Gastrocnemius medialis (tissue), 4 donors: ENCODE measurements at regions of chr9 and their contacts with region 1.

Region 1: DNA sequence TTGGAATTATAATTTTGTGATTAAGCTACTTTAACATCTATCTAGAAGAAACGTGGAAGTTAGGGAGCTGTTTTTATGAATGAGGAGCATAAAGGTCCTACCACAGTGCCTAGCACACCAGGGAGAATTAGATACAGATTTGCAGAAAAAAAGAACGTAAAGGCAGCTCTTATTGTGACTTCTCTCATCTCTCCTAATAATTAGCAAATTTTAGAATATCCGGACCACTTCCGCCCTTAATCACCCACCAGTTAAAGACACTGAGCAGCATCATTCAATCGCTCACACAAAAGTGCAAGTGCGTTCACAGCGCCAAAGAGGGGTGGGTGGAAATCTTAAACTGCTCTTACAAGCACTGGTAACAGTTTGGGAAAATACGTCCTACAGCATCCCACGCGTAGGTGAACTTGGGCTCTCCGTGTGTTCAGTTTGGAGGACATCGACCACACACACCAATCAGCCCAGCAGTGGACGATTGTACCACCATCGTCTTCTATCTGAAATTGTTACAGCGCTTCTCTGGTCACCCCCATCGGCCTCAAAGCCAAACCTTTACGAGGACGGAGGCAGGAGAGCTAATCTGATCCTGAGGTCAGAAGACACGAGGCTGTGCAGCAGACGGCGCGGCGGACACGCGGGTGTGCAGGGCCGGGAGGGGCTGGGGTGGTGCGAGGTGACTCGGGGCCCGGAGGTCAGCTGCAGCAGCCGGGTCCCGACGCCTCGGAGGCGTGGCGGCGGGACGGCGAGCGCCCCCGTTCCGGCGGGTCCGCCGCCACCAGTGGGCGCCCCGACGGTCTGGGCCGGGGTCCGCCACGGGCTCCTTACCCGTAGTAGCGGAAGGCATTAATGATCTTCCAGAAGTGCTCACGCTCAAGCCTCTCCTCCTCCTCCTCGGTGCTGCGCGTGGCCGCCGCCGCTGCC is 646 bp downstream of the CARNMT1 start:
- DNase-seq: peak; percentile 49 to 70
- ATAC-seq: peak; percentile 71 to 74
- H3K4me3 ChIP-seq: peak overlapping the region; percentile 63 to 94 (median 64)
- H3K27ac ChIP-seq: peak overlapping the region; percentile 78 to 96 (median 84)
- H3K4me1 ChIP-seq: peaks cover 23 to 26% of the 10 kb centered on the region in 2 donors
- H3K27me3 ChIP-seq: no peaks in the 10 kb centered on the region
- CTCF ChIP-seq: peak in 2 of 5 experiments; percentile 17 to 47
- POLR2A ChIP-seq: no peak

Region 2: GRCh38 chr9:75088260-75088905 is 60.9 kb after region 1 on chr9 and contains the start of gene OSTF1:
- in situ Hi-C with region 1: loop called in 1 of 4 experiments (anchors 10 kb)
- intact Hi-C with region 1: loop called (anchors 1 kb)
- DNase-seq: peak; percentile 92 to 93
- ATAC-seq: peak; percentile 83 to 84
- H3K4me3 ChIP-seq: peak within 1 kb of the TSS; percentile 84 to 97 (median 94)
- H3K27ac ChIP-seq: peak within 1 kb of the TSS; percentile 89 to 99 (median 94)
- H3K4me1 ChIP-seq: peaks cover 0 to 20% of the 10 kb centered on the region in 2 donors
- H3K27me3 ChIP-seq: no peaks in the 10 kb centered on the region
- CTCF ChIP-seq: no peak
- POLR2A ChIP-seq: peak; percentile 89 to 93
- total RNA-seq, gene OSTF1: 5.2 to 9.8 (median 6.2) TPM